Heart left ventricle (tissue), 16 donors: ENCODE measurements at regions of chrX and their contacts with region 1.

Region 1: DNA sequence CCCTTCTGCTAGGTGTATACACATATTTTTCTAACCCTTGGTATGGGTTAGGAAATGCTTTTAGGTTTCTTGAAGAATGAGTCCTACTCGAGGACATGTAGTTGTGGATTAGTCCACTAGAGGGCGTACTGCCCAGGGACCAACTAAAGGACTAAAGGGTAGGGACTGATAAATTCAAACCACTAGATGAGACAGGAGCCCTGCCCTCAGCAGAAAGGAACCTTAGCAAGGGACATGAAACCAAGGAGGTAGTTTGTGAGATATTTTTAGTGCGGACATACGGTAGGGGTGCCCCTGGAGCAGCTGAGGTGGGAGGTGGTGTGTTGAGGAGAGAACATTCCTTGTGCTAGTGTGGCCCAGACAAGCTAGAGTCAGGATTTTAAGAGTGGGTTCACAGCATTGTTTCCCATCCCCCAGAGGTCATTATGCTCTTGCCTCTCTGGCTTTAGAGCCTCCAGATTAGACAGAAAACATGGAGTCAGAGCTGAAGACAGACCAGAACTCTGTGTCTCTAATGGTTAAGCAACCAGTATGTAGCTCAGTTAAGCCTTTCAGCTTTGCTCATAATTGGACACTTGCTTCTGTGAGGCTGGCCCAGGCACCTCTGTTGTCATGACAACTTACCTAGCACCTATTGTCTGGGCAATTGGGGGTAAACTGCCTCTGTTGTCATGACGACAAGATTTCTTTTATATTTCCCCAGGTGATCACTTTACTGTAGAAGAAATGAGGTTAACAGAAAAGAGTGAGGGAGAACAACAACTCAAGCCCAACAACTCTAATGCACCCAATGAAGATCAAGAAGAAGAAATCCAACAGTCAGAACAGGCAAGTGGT is 1.0 kb downstream of the TMEM31 start:
- DNase-seq: peak in 2 of 5 donors; percentile 22 to 41
- ATAC-seq: peak in 2 of 4 donors; percentile 54 to 69
- H3K4me3 ChIP-seq: no peak overlapping the region
- H3K27ac ChIP-seq: no peak overlapping the region
- H3K4me1 ChIP-seq: no peaks in the 10 kb centered on the region
- H3K27me3 ChIP-seq: peaks cover 0 to 4% (median 0%) of the 10 kb centered on the region in 9 donors
- CTCF ChIP-seq: peak; percentile 45 to 72 (median 59)
- POLR2A ChIP-seq: no peak

Region 2: DNA sequence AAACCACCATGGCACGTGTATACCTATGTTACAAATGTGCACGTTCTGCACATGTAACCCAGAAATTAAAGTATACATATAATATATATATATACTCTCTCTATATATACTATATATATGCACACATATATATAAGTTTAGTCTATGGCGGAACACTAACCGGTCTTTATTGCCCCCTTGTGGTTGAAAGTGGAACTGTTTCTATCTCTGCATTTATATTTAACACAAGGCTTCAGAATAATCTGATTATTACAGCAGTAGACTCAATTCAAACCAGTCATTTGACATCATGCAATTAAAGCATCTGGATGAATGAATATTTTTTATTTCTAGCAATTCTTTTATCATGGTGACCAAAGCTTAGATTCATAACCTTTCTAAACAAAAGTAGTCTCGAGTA is 105.8 kb after region 1 on chrX:
- intact Hi-C with region 1: loop called in 5 of 10 experiments (anchors 5 to 10 kb)
- DNase-seq: no peak
- ATAC-seq: no peak
- H3K4me3 ChIP-seq: no peak overlapping the region
- H3K27ac ChIP-seq: no peak overlapping the region
- H3K4me1 ChIP-seq: no peaks in the 10 kb centered on the region
- H3K27me3 ChIP-seq: peaks cover 0 to 9% (median 0%) of the 10 kb centered on the region in 9 donors
- CTCF ChIP-seq: peak; percentile 48 to 91 (median 72)
- POLR2A ChIP-seq: no peak